ENCODE measurements at regions of chr12 and their contacts with region 1.

Region 1: GRCh38 chr12:96445691-96446583 is 43.4 kb upstream of the CFAP54 start:
- DNase-seq: peak; percentile 90
- ATAC-seq: peak; percentile 58
- H3K4me3 ChIP-seq: peak overlapping the region; percentile 26; the same call in 1 of the 2 replicates
- H3K27ac ChIP-seq: peak overlapping the region; percentile 92
- H3K4me1 ChIP-seq: peaks cover 37% of the 10 kb centered on the region
- H3K27me3 ChIP-seq: no peaks in the 10 kb centered on the region
- CTCF ChIP-seq: no peak

Region 2: GRCh38 chr12:95712269-95712668 is 733.7 kb before region 1 on chr12:
- CTCF ChIA-PET with region 1: interaction called, 12 read pairs
- POLR2A ChIA-PET with region 1: no interaction called
- intact Hi-C with region 1: no loop called
- DNase-seq: no peak
- ATAC-seq: no peak
- H3K4me3 ChIP-seq: no peak overlapping the region
- H3K27ac ChIP-seq: no peak overlapping the region
- H3K4me1 ChIP-seq: peaks cover 15% of the 10 kb centered on the region
- H3K27me3 ChIP-seq: no peaks in the 10 kb centered on the region
- CTCF ChIP-seq: no peak

Region 3: GRCh38 chr12:96427269-96427729 is 18.6 kb before region 1 on chr12:
- CTCF ChIA-PET with region 1: no interaction called
- POLR2A ChIA-PET with region 1: interaction called, 6 read pairs
- intact Hi-C with region 1: loop called (anchors 1 kb)
- DNase-seq: peak; percentile 97
- ATAC-seq: peak; percentile 86
- H3K4me3 ChIP-seq: peak overlapping the region; percentile 40
- H3K27ac ChIP-seq: peak overlapping the region; percentile 91
- H3K4me1 ChIP-seq: peaks cover 38% of the 10 kb centered on the region
- H3K27me3 ChIP-seq: no peaks in the 10 kb centered on the region
- CTCF ChIP-seq: no peak

Region 4: DNA sequence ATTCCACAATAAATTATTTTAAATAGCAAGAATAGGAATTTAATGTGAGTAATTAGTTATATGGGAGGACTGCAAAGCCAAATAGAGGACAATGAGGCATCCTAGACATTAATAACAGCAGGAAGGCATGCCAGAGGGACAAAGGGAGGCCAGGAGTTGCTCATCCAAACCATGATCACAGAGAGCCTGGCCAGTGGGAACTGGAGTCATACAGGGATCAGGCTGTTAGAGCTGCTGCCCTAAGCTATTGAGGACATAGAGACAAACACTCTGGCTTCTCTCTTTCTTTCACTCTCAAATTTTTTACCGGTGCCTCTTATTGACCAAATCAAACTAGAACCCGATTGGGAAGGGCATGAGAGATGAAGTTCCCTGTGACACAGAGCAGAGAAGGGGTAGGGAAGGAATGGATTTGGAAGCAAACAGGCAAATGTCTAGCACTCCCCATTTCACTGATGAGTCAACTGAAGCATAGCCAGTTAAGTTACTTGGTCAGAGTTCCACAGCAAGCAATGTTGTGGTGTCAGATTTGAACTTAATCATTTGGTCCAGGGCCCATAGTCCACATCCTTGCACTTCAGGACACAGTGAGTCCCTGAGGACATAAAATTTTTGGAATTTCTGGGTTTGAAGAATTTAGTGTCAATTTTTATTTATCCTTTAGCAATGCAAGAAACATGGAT is 25.6 kb after region 1 on chr12:
- CTCF ChIA-PET with region 1: no interaction called
- POLR2A ChIA-PET with region 1: no interaction called
- intact Hi-C with region 1: no loop called
- DNase-seq: peak; percentile 72
- ATAC-seq: peak; percentile 66
- H3K4me3 ChIP-seq: no peak overlapping the region
- H3K27ac ChIP-seq: peak overlapping the region; percentile 58
- H3K4me1 ChIP-seq: peaks cover 31% of the 10 kb centered on the region
- H3K27me3 ChIP-seq: no peaks in the 10 kb centered on the region
- CTCF ChIP-seq: no peak

Region 5: DNA sequence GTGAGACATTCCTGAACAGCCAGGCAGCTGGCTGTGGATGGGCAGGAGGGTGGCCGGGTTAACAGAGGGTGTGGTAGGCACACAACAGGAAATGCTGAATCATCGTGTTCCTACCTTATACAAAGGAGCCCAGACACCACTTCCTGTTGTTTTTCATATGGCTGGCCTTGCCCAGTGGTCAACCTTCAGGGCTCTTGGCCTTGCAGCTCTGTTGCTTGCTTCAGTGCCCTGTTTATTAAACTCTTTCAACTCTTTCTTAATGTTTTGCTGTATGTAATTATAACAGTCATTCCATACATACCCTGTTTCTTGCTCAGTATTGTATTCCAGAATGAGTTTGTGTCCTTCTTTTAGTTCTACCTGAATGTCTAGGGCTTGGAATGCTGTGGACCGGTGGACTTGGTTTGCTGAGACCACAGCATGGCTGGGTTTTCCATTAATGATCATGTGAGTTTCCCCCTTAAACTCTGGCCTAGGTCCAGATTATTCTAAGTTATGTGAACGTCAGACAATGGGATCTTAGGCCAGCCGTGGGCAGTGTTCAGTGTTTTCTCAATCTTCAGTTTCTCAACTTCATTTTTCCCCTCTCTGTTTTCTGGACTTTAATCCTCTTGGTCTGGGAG is 55.3 kb after region 1 on chr12:
- CTCF ChIA-PET with region 1: no interaction called
- POLR2A ChIA-PET with region 1: no interaction called
- intact Hi-C with region 1: loop called (anchors 5 kb)
- DNase-seq: peak; percentile 85
- ATAC-seq: peak; percentile 99
- H3K4me3 ChIP-seq: peak overlapping the region; percentile 14; the same call in 1 of the 2 replicates
- H3K27ac ChIP-seq: peak overlapping the region; percentile 84
- H3K4me1 ChIP-seq: peaks cover 27% of the 10 kb centered on the region
- H3K27me3 ChIP-seq: no peaks in the 10 kb centered on the region
- CTCF ChIP-seq: no peak

Region 6: DNA sequence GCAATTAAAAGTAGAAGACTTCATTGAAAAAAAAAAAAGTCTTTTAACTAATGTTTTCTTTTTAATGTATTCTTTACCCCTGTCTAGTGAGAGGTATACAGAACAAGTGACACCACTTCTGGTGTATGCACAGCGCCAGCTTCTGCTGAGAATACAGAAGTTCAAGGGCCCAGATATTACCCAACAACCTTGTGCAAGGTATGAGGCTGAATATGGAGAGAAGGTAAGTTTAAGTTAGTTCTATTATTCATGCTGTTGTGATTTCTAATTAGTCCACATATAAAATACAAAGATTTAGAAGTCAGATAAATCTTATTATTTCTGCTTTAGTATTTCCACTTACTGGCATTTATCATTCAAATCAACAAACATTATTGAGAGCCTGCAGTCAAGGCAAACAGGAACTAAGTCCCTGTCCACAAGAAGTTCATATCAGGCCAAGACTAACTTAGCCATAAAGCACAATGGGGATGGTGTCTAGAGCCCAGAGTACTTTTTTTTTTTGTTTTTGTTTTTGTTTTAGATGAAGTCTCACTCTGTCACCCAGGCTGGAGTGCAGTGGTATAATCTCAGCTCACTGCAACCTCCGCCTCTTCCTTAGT is 212.3 kb after region 1 on chr12:
- CTCF ChIA-PET with region 1: no interaction called
- POLR2A ChIA-PET with region 1: no interaction called
- intact Hi-C with region 1: no loop called
- DNase-seq: no peak
- ATAC-seq: peak; percentile 77
- H3K4me3 ChIP-seq: no peak overlapping the region
- H3K27ac ChIP-seq: no peak overlapping the region
- H3K4me1 ChIP-seq: no peaks in the 10 kb centered on the region
- H3K27me3 ChIP-seq: peaks cover 4% of the 10 kb centered on the region; the same call in 1 of the 2 replicates
- CTCF ChIP-seq: no peak; the same call in 1 of the 2 replicates

Measured in PC-3 (cell line).